Activated naive CD4-positive, alpha-beta T cell treated with anti-CD3 and anti-CD28 coated beads for 36 hours (primary cell): ENCODE measurements at regions of chr13 and their contacts with region 1.

Region 1: DNA sequence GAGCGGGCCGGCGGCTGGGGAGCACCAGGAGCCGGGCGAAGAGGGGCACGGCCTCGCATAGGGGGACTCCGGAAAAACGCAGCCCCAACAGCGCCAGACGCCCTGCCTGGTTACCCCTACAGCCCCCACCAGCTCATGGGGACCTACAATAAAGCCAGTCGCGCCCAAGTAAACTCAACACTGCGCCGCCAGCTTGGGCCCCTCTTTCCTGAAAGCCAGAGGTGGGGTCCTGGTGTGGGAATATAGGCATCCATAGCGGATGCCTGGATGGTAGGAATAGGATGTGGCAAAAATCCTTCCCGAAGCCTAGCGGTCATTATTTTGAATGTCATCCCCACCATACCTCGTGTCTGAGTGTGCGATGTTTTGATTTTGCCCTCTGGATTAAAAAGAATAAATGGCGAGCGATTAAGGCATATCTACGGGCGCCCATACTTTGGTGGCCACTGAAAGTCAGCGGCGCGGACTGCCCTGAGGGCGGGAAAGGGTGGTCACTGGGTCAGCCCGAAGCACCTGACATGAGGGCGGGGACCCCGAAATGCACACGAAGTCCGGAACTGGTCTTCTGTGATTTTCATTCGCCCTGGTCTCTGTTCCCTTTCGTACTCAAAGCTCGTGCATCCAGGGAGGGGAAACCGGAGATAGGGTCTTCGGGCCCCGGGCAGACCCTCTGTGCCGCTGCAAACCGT is at the starts of genes NHLRC3 and PROSER1:
- DNase-seq: peak; percentile 86
- H3K4me3 Mint-ChIP-seq: peak within 1 kb of the TSS; percentile 90
- H3K27ac Mint-ChIP-seq: peak within 1 kb of the TSS; percentile 90
- H3K4me1 Mint-ChIP-seq: peaks cover 41% of the 10 kb centered on the region
- H3K27me3 Mint-ChIP-seq: no peaks in the 10 kb centered on the region
- total RNA-seq, gene NHLRC3: 12.0 to 13.1 TPM
- total RNA-seq, gene PROSER1: 73.4 to 78.8 TPM

Region 2: DNA sequence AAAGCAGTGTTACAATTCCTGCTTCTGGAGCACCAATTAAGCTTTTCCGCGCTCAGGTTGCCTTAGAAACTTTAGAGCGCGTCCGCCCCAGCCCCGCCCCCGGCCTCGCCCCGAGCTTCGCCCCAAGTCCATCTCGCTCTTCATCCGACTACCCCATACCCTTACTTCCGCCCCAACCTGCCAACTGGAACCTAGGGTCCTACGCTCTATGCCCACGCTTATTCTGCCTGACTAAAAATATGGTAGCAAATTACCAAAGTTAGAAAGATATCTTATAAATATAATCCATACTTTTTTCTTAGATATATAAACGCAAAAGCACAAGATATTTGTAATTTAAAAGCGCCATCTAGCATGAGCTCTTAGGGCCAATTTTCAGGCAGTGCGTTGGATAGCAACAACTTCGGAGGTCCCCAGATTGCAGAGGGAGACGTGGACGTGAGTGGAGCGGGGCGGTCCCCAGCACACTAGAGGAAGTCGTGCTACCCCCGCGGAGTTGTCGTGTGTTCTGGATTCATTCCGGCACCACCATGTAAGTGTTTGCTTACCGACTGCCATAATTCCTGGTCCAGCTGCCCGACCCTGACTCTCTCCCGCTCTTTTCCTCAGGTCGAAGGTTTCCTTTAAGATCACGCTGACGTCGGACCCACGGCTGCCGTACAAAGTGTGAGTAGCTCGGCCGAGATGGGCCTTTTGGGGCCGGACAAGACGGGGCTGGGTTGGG is 688.5 kb before region 1 on chr13 and contains the start of gene UFM1:
- CTCF ChIA-PET with region 1: no interaction called
- intact Hi-C with region 1: loop called (anchors 2 kb)
- DNase-seq: peak; percentile 90
- H3K4me3 Mint-ChIP-seq: peak within 1 kb of the TSS; percentile 95
- H3K27ac Mint-ChIP-seq: peak within 1 kb of the TSS; percentile 97
- H3K4me1 Mint-ChIP-seq: peaks cover 37% of the 10 kb centered on the region
- H3K27me3 Mint-ChIP-seq: no peaks in the 10 kb centered on the region
- total RNA-seq, gene UFM1: 36.5 to 41.7 TPM

Region 3: GRCh38 chr13:39095500-39095899 is 57.5 kb after region 1 on chr13:
- CTCF ChIA-PET with region 1: interaction called, 3 read pairs
- intact Hi-C with region 1: loop called (anchors 1 kb)
- DNase-seq: no peak
- H3K4me3 Mint-ChIP-seq: peak overlapping the region; percentile 30
- H3K27ac Mint-ChIP-seq: peak overlapping the region; percentile 78
- H3K4me1 Mint-ChIP-seq: peaks cover 24% of the 10 kb centered on the region
- H3K27me3 Mint-ChIP-seq: no peaks in the 10 kb centered on the region

Region 4: GRCh38 chr13:39263033-39263432 is 225.0 kb after region 1 on chr13:
- CTCF ChIA-PET with region 1: interaction called, 4 read pairs
- intact Hi-C with region 1: loop called (anchors 5 kb)
- DNase-seq: peak; percentile 68
- H3K4me3 Mint-ChIP-seq: no peak overlapping the region
- H3K27ac Mint-ChIP-seq: no peak overlapping the region
- H3K4me1 Mint-ChIP-seq: peaks cover 14% of the 10 kb centered on the region
- H3K27me3 Mint-ChIP-seq: peaks cover 6% of the 10 kb centered on the region

Region 5: DNA sequence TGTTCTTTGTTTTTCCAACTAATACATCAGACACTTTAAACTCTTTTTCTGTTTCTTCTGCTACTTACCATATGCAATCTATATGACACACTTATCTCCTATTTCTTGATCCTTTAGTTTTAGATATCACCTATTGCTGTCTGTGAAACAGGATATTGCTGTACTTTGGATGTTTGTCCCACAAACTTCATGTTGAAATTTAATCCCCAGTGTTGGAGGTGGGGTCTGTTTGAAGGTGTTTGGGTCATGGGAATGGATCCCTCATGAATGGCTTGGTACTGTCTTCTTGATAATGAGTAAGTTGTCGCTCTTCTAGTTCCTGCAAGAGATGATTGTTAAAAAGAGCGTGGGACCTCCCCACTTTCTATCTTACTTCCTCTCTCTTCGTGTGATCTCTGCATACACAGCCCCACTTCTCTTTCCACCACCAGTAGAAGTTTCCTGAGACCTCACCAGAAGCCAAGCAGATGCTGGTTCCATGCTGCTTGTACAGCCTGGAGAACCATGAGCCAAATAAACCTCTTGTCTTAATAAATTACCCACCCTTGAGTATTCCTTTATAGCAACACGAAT is 244.5 kb after region 1 on chr13:
- CTCF ChIA-PET with region 1: no interaction called
- intact Hi-C with region 1: no loop called
- DNase-seq: no peak
- H3K4me3 Mint-ChIP-seq: no peak overlapping the region
- H3K27ac Mint-ChIP-seq: no peak overlapping the region
- H3K4me1 Mint-ChIP-seq: no peaks in the 10 kb centered on the region
- H3K27me3 Mint-ChIP-seq: peaks cover 29% of the 10 kb centered on the region

Region 6: GRCh38 chr13:39618561-39618960 is 580.5 kb after region 1 on chr13:
- CTCF ChIA-PET with region 1: no interaction called
- intact Hi-C with region 1: no loop called
- DNase-seq: no peak
- H3K4me3 Mint-ChIP-seq: no peak overlapping the region
- H3K27ac Mint-ChIP-seq: no peak overlapping the region
- H3K4me1 Mint-ChIP-seq: no peaks in the 10 kb centered on the region
- H3K27me3 Mint-ChIP-seq: peaks cover 7% of the 10 kb centered on the region

Region 7: DNA sequence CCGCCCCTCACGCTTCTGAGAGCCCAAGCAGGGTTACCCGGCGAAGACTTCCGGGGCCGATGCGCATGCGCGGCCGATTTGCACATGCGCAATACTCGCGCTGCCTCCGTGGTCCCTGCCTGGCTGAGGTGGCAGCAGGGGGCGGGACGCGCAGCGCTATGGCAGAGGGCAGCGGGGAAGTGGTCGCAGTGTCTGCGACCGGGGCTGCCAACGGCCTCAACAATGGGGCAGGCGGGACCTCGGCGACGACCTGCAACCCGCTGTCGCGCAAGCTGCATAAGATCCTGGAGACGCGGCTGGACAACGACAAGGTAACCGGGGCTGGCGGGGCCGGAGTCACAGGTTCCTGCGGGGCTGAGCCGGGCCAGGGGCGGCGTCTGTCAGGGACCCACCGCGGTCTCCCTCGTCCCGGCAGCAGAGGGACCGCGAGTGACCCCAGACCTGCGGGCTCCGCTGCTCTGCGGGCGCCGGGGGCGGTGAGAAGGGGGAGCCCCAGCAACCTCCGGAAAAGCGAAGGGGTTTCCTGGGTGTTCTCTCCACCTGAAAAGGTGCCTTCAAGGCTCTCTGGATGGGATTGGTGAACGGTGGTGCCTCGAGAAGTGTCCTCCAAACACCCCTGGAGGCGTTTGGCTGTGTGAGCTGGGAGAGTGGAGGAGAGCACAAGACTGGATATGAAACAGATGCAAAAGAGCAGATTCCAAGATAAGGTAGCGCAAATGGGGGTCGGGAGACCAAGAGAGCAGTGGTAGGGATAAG is 617.7 kb after region 1 on chr13 and contains the start of gene COG6:
- CTCF ChIA-PET with region 1: no interaction called
- intact Hi-C with region 1: loop called (anchors 1 kb)
- DNase-seq: peak; percentile 93
- H3K4me3 Mint-ChIP-seq: peak within 1 kb of the TSS; percentile 92
- H3K27ac Mint-ChIP-seq: peak within 1 kb of the TSS; percentile 74
- H3K4me1 Mint-ChIP-seq: peaks cover 27% of the 10 kb centered on the region
- H3K27me3 Mint-ChIP-seq: peaks cover 2% of the 10 kb centered on the region
- total RNA-seq, gene COG6: 21.2 to 28.3 TPM

Region 8: GRCh38 chr13:40770934-40771618 is 1733.1 kb after region 1 on chr13 and contains the start of gene MRPS31:
- CTCF ChIA-PET with region 1: no interaction called
- intact Hi-C with region 1: loop called (anchors 5 kb)
- DNase-seq: peak; percentile 95
- H3K4me3 Mint-ChIP-seq: peak within 1 kb of the TSS; percentile 98
- H3K27ac Mint-ChIP-seq: peak within 1 kb of the TSS; percentile 95
- H3K4me1 Mint-ChIP-seq: peaks cover 33% of the 10 kb centered on the region
- H3K27me3 Mint-ChIP-seq: no peaks in the 10 kb centered on the region
- total RNA-seq, gene MRPS31: 28.4 to 28.8 TPM